ENCODE measurements at regions of chrX and their contacts with region 1.

Region 1: DNA sequence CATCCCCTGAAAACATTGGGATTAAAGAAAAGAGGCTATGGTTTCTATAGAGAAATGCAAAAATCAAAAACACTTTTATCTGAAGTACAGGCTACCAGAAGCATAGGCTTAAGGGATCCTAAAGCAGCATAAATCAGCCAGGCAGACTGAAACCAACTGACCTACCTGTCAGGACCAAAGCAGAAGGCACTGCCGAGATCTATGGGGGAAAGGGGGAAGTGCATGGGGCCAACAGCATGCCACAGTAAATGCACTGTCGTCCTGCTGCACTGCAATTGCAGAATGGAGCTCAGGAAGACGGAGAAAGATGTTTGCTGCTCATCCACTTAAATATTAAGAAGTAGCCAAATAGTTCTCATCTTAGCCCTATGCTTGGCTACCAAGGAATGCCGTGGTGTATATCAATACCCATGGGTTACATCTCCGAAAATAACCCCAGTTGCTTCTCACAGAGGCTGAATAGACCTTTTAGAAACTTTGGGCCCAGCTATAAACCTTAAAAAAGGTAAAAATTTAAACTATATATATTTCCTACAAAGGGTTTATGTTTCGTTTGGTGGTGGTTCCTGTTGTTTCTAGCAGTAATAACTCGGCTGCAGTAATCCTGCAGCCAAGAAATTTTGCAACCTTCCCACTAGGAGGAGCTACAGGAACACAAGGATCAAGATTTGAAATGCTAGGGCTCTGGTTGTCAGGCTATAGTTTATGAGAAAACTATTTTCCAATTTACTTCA is 312.2 kb upstream of the DIAPH2 start:
- DNase-seq: no peak
- H3K4me3 ChIP-seq: peak overlapping the region in 1 of 4 donors; percentile 30
- H3K27ac ChIP-seq: no peak overlapping the region
- H3K4me1 ChIP-seq: peaks cover 0 to 24% (median 7%) of the 10 kb centered on the region in 4 donors
- H3K27me3 ChIP-seq: no peaks in the 10 kb centered on the region
- CTCF ChIP-seq: peak; percentile 64 to 73 (median 66)
- EP300 ChIP-seq: no peak
- POLR2A ChIP-seq: no peak

Region 2: DNA sequence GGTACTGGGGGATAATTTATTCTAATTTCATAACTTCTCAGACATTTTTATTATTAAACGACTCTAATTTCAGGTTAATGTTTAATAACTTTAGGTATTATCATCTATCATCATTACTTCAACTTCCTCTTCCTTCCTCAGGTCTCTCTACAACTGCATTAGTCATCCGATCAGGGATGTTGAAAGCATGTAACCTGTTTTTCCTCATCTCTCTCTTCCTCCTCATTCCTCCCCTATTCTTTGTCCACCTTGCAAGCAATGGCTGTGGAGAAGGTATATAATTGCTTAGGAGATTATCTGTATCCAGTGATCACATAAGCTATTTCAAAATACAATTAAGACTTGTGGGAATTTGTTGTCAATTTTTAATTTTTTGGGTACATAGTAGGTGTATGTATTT is 320.4 kb before region 1 on chrX:
- intact Hi-C with region 1: no loop called
- DNase-seq: no peak
- H3K4me3 ChIP-seq: no peak overlapping the region
- H3K27ac ChIP-seq: no peak overlapping the region
- H3K4me1 ChIP-seq: no peaks in the 10 kb centered on the region
- H3K27me3 ChIP-seq: no peaks in the 10 kb centered on the region
- CTCF ChIP-seq: no peak
- EP300 ChIP-seq: no peak
- POLR2A ChIP-seq: no peak

Region 3: GRCh38 chrX:96684339-96685209 is 312.1 kb after region 1 on chrX and contains the start of gene DIAPH2:
- intact Hi-C with region 1: loop called (anchors 5 kb)
- DNase-seq: peak; percentile 92
- H3K4me3 ChIP-seq: peak within 1 kb of the TSS; percentile 70 to 75 (median 72)
- H3K27ac ChIP-seq: peak within 1 kb of the TSS; percentile 82 to 88 (median 86)
- H3K4me1 ChIP-seq: peaks cover 0 to 31% (median 25%) of the 10 kb centered on the region in 4 donors
- H3K27me3 ChIP-seq: peaks cover 0 to 3% (median 0%) of the 10 kb centered on the region in 4 donors
- CTCF ChIP-seq: peak in 1 of 3 experiments; percentile 43
- EP300 ChIP-seq: no peak
- POLR2A ChIP-seq: no peak
- total RNA-seq, gene DIAPH2: 41.8 to 64.5 (median 54.5) TPM

Region 4: GRCh38 chrX:96764864-96765263 is 392.4 kb after region 1 on chrX:
- intact Hi-C with region 1: loop called (anchors 10 kb)
- DNase-seq: no peak
- H3K4me3 ChIP-seq: no peak overlapping the region
- H3K27ac ChIP-seq: no peak overlapping the region
- H3K4me1 ChIP-seq: peaks cover 0 to 7% (median 0%) of the 10 kb centered on the region in 4 donors
- H3K27me3 ChIP-seq: no peaks in the 10 kb centered on the region
- CTCF ChIP-seq: no peak
- EP300 ChIP-seq: no peak
- POLR2A ChIP-seq: no peak

Region 5: DNA sequence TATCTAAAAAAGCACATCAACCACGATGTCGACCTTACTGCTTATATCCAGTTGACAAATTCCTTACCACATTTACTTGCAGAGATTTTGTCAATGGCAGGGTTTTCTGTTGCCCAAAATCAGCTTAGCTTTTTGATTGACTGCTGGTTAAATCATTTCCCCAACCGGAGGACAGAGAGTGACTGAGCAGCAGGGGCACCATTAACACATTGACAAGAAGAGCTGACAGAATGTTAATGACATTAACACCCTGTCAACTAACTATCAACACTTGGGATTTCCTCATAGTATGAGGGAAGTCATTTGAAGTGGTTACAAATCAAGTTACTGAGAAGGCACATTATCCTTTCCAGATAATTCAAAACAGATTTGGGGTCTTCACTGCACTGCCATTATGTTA is 879.6 kb after region 1 on chrX:
- intact Hi-C with region 1: no loop called
- DNase-seq: no peak
- H3K4me3 ChIP-seq: no peak overlapping the region
- H3K27ac ChIP-seq: no peak overlapping the region
- H3K4me1 ChIP-seq: no peaks in the 10 kb centered on the region
- H3K27me3 ChIP-seq: no peaks in the 10 kb centered on the region
- CTCF ChIP-seq: no peak
- EP300 ChIP-seq: no peak
- POLR2A ChIP-seq: no peak

Measured in esophagus muscularis mucosa (tissue), 4 donors.